HEK293 (cell line): ENCODE measurements at regions of chr3 and their contacts with region 1.

Region 1: GRCh38 chr3:184513276-184514170 is 48.1 kb upstream of the EPHB3 start:
- H3K4me3 ChIP-seq: peak overlapping the region; percentile 47
- H3K27ac ChIP-seq: no peak overlapping the region
- H3K4me1 ChIP-seq: no peaks in the 10 kb centered on the region; the same call in 1 of the 2 replicates
- CTCF ChIP-seq: peak; percentile 77

Region 2: GRCh38 chr3:184371570-184372018 is 141.9 kb before region 1 on chr3:
- CTCF ChIA-PET with region 1: interaction called, 85 read pairs
- POLR2A ChIA-PET with region 1: interaction called, 12 read pairs
- H3K4me3 ChIP-seq: no peak overlapping the region
- H3K27ac ChIP-seq: no peak overlapping the region
- H3K4me1 ChIP-seq: no peaks in the 10 kb centered on the region
- CTCF ChIP-seq: peak; percentile 86

Region 3: DNA sequence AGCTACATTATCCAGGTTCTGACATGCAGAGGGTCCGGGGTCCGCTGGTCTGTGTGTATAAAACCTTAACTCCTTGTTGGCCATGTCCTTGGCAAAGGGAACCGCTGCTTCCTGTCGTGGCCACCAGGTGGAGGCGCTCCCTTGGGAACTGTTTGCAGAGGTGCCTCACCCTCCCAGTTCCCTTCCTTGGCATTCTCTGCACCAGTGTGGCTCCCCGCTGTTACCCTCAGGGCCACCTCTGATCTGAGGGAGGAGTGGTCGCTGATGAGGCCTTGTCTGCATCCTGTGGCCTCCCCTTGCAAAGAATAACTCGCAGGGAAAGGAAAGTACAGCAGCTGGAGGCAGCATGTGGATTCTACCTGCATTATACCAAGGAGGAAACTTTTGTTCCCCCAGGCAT is 44.1 kb before region 1 on chr3:
- CTCF ChIA-PET with region 1: interaction called, 48 read pairs
- POLR2A ChIA-PET with region 1: no interaction called
- H3K4me3 ChIP-seq: no peak overlapping the region
- H3K27ac ChIP-seq: no peak overlapping the region
- H3K4me1 ChIP-seq: no peaks in the 10 kb centered on the region
- CTCF ChIP-seq: 0 out of 2 replicates have a peak, but pooled peaks have one; percentile 38

Region 4: DNA sequence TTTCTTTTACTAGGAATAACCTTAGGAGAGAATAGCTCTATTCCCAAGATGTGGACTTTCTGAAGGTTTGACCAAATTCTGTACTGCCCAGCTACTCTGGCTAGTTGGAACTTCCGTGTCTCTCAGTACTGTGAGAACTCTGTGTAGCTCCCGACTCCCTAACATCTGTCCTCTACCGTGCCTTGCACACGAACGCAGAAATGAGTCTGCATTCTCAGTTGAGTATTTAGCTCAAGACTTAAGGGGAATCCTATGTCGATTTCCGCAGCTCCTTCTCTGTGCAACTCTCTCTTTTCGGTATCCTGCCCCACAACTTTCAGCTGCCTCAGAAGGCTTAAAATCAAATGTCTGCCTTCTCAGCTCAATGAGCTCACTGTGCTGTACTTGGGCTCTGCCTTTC is 38.6 kb before region 1 on chr3:
- CTCF ChIA-PET with region 1: interaction called, 48 read pairs
- POLR2A ChIA-PET with region 1: no interaction called
- H3K4me3 ChIP-seq: no peak overlapping the region
- H3K27ac ChIP-seq: no peak overlapping the region
- H3K4me1 ChIP-seq: no peaks in the 10 kb centered on the region
- CTCF ChIP-seq: no peak

Region 5: DNA sequence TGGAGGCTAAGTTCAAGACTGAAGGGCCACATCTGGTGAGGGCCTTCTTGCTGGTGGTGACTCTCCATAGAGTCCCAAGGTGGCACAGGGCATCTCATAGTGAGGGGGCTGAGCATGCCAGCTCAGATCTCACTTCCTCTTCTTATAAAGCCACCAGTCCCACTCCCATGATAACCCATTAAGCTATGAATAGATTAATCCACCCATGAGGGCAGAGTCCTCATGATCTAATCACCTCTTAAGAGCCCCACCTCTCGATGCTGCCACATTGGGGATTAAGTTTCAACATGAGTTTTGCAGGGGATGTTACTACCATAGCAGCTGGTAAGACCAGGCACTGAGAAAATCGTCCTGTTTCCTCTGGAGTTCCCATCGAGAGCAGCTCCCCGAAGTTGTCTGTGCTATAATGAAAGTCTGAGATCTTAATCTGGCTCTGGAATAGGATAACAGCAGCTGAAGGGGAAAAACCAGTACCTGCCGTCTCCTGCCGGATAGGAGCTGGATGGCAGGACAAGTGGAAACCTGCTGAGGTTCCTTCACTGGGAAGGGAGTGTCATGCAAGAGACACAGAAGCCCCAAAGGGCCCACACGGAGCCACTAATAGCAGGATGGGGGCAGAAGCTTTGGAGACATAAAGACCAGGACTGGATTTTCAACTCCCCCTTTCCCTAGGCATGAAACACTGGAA is 31.4 kb before region 1 on chr3:
- CTCF ChIA-PET with region 1: interaction called, 17 read pairs
- POLR2A ChIA-PET with region 1: no interaction called
- H3K4me3 ChIP-seq: no peak overlapping the region
- H3K27ac ChIP-seq: no peak overlapping the region
- H3K4me1 ChIP-seq: peaks cover 7% of the 10 kb centered on the region
- CTCF ChIP-seq: no peak

Region 6: DNA sequence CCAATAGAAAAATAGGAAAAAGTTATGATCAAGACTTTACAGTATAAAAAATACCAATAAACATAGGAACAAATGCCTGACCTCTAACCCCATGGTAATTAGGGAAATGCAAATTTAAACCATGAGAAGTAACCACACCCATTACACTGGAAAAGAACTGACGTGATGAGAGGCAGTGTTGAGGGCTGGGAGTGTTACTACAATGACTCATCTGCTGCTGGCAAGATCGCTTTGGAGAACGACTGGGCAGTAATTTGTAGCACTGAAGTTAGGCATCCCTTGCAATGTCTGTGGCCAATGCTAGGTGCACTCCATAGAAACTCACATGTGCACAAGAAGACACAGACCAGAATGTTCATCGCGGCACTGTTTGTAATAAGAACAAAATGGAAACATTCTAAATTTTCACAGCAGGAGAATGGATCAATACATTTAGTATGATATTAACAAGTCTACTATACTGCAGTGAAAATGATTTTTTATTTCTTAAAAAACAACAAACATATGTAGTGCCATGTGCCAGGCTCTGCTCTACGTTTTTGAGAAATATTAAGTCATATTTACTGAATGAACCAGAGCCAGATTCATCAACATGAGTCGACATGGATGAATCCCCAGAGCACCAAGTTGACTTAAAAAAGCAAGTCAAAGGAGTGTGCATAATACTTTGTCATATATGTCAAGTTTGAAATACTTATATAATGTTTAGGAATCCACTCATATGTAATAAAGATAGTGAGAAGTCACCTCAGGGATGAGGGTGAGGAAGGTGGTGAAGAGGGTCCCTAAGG is 10.5 kb after region 1 on chr3:
- CTCF ChIA-PET with region 1: interaction called, 10 read pairs
- POLR2A ChIA-PET with region 1: no interaction called
- H3K4me3 ChIP-seq: no peak overlapping the region
- H3K27ac ChIP-seq: no peak overlapping the region
- H3K4me1 ChIP-seq: no peaks in the 10 kb centered on the region
- CTCF ChIP-seq: no peak

Region 7: GRCh38 chr3:184543843-184544512 is 30.5 kb after region 1 on chr3:
- CTCF ChIA-PET with region 1: interaction called, 51 read pairs
- POLR2A ChIA-PET with region 1: no interaction called
- H3K4me3 ChIP-seq: no peak overlapping the region
- H3K27ac ChIP-seq: no peak overlapping the region
- H3K4me1 ChIP-seq: no peaks in the 10 kb centered on the region
- CTCF ChIP-seq: peak; percentile 63; the same call in 1 of the 2 replicates

Region 8: DNA sequence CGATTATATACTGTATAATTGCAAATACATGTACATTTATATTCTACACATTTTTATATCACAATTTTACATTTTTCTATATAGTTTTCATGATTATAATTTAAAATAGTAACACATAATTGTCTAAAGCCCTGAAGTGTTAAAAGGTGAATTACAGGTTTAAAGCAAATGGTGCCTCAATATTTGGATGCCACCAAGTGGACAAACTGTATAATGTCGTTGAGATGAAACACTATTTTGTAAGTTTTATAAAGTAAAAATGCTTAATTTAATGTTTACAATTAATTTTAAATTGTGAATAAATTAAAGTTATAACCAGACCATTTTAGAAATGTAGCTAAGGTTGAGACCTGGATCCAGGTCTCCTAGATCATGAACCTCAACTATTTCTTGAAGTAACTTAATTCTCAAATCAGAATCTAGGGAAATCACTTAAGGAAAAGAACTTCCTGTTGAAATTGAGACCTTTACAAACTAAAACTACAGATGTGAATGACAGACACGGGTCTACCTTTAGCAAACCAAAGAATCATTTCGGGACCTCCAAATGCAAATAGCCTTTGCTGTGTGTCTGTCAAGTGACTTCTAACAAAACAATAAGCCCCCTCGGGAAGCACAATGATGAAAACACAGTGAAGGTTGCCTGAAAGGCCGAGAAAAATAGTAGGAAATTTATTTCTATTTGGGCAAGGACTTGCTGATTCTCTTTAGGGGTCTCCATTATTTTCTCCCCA is 702.5 kb after region 1 on chr3:
- CTCF ChIA-PET with region 1: no interaction called
- POLR2A ChIA-PET with region 1: no interaction called
- H3K4me3 ChIP-seq: no peak overlapping the region
- H3K27ac ChIP-seq: no peak overlapping the region
- H3K4me1 ChIP-seq: no peaks in the 10 kb centered on the region
- CTCF ChIP-seq: no peak